OCI-LY7 (cell line): ENCODE measurements at regions of chr10 and their contacts with region 1.

Region 1: DNA sequence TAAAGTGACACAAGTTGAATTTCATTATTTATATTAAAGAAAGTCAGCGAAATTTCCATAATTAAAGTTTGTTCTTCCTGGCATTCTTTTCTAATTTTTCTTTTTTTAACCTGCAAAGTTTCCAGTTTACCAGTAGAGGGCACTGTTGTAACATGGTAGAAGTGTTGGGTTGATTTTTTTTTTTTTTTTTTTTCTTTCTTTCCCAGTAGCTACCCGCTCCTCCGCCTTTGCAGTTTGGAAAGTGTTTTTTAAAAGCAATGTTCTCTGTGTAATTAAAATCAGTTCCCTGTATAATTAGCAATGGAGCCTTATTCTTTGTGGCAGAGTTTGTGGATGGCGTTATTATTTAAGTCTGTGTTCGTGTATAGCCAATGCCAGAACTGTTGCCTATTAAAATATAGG is 53.7 kb downstream of the TAF3 start:
- DNase-seq: peak; percentile 46
- H3K4me3 ChIP-seq: no peak overlapping the region
- H3K27ac ChIP-seq: no peak overlapping the region
- H3K4me1 ChIP-seq: no peaks in the 10 kb centered on the region
- CTCF ChIP-seq: peak; percentile 98

Region 2: DNA sequence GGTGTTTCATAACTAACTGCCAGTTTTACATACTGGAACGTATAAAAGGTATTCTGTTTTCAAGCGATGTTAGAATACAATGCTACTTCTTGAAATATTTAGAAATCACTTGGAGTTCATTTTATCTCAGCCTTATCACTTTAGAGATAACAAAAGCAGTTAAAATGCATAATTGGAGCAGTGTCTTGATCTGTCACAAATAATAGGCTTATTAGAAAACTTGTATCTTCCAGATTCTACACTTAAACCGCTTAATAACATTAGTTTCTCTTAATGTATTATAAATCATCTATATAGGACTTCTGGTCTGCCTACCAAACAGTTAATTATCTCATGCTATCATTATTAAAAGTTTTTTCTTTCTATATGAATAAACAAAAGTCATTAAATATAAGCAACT is 50.7 kb after region 1 on chr10:
- CTCF ChIA-PET with region 1: no interaction called
- POLR2A ChIA-PET with region 1: no interaction called
- intact Hi-C with region 1: no loop called
- DNase-seq: no peak
- H3K4me3 ChIP-seq: no peak overlapping the region
- H3K27ac ChIP-seq: no peak overlapping the region
- H3K4me1 ChIP-seq: no peaks in the 10 kb centered on the region
- CTCF ChIP-seq: no peak

Region 3: GRCh38 chr10:8331883-8332729 is 460.1 kb after region 1 on chr10:
- CTCF ChIA-PET with region 1: no interaction called
- POLR2A ChIA-PET with region 1: no interaction called
- intact Hi-C with region 1: loop called (anchors 10 kb)
- DNase-seq: no peak
- H3K4me3 ChIP-seq: no peak overlapping the region
- H3K27ac ChIP-seq: no peak overlapping the region
- H3K4me1 ChIP-seq: no peaks in the 10 kb centered on the region
- CTCF ChIP-seq: no peak

Region 4: DNA sequence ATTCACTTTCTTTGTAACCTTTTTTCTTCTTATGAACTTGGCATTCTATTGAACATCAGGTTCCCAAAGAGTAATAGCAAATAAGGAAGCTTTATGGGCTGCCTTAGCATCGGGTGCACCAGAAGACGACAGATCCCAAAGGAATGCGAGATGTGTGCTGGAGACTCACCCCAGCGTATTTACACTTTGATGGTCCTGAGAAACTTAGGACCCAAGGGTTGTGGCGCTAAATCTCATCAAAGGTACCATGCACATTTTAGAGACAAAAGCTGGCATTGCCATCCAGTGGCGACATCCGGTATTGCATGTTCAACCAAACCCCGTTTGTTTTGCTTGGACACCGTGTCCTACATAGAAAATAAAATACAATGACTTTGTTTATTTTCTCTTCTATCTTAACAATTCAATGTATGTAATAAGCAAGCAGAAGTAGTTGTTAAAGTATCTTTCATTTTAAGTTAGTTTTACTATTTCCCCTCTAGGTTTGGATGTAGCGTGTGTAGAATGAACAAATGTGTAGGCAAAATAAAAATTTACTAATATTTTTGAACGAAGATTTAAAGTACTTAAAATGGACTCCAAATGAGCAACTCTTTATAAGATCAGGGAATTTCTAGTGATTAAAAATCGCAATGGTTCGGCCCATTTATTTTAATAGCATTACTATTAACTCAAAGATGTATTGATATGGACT is 1337.2 kb after region 1 on chr10:
- CTCF ChIA-PET with region 1: no interaction called
- POLR2A ChIA-PET with region 1: no interaction called
- intact Hi-C with region 1: loop called (anchors 2 kb)
- DNase-seq: peak; percentile 60
- H3K4me3 ChIP-seq: no peak overlapping the region
- H3K27ac ChIP-seq: no peak overlapping the region
- H3K4me1 ChIP-seq: no peaks in the 10 kb centered on the region
- CTCF ChIP-seq: peak; percentile 93

Region 5: GRCh38 chr10:9302120-9302746 is 1430.2 kb after region 1 on chr10:
- CTCF ChIA-PET with region 1: no interaction called
- POLR2A ChIA-PET with region 1: no interaction called
- intact Hi-C with region 1: loop called (anchors 5 kb)
- DNase-seq: peak; percentile 57
- H3K4me3 ChIP-seq: no peak overlapping the region
- H3K27ac ChIP-seq: no peak overlapping the region
- H3K4me1 ChIP-seq: no peaks in the 10 kb centered on the region
- CTCF ChIP-seq: peak; percentile 80